Activated T-helper 2 cell treated with anti-CD3 and anti-CD28 coated beads, Interferon-gamma antibody, Interleukin-2, Interleukin-4, amounts not matched to agents 10 μg/mL and 5 μg/mL and 100 μg/mL, durations not matched to agents 14 hours and 24 hours and 36 hours (primary cell): ENCODE measurements at regions of chr22 and their contacts with region 1.

Region 1: GRCh38 chr22:36301384-36301828 is 48.5 kb downstream of the APOL1 start:
- DNase-seq: peak; percentile 68
- H3K4me3 Mint-ChIP-seq: no peak overlapping the region
- H3K27ac Mint-ChIP-seq: no peak overlapping the region
- H3K4me1 Mint-ChIP-seq: peaks cover 8% of the 10 kb centered on the region
- H3K27me3 Mint-ChIP-seq: no peaks in the 10 kb centered on the region

Region 2: GRCh38 chr22:36027935-36028645 is 273.3 kb before region 1 on chr22:
- intact Hi-C with region 1: no loop called
- DNase-seq: no peak
- H3K4me3 Mint-ChIP-seq: peak overlapping the region; percentile 79
- H3K27ac Mint-ChIP-seq: no peak overlapping the region
- H3K4me1 Mint-ChIP-seq: peaks cover 15% of the 10 kb centered on the region
- H3K27me3 Mint-ChIP-seq: peaks cover 44% of the 10 kb centered on the region

Region 3: DNA sequence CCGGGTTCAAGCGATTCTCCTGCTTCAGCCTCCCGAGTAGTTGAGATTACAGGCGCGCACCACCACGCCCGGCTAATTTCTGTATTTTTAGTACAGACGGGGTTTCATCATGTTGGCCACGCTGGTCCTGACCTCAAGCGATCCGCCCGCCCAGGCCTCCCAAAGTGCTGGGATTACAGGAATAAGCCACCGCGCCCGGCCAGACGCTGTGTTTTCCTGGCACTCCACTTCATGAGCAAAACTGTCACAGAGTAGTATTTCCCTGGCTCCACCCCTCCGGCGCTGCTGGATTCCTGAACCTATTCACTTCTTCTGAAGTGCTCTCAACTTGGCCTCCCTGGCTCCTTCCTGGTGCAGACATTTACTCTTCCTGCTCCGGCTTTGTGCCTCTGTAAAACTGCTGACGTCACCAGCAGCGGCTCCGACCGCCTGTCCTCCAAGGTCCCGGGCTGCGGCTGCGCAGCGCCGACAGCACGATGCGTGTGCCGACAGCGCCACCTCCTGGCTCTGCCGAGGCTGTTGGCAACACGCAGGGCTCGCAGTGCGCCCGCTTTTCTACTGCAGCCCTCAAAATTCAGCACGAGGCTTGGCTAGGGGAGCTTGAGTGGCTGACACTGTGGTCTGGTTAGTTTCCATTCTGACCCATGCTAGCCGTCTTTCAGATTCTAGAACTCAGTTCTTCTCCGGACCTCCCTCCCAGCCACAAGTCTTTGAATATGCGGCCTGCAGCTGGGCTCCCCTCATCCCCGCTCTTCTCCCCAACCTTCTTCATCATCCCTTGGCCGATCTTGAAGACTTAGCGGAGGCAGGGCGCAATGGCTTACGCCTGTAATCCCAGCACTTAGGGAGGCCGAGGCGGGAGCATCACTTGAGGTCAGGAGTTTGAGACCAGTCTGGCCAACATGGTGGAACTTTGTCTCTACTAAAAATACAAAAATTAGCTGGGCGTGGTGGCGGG is 177.5 kb before region 1 on chr22:
- intact Hi-C with region 1: no loop called
- DNase-seq: peak; percentile 90
- H3K4me3 Mint-ChIP-seq: peak overlapping the region; percentile 32
- H3K27ac Mint-ChIP-seq: peak overlapping the region; percentile 81
- H3K4me1 Mint-ChIP-seq: peaks cover 7% of the 10 kb centered on the region
- H3K27me3 Mint-ChIP-seq: peaks cover 13% of the 10 kb centered on the region

Region 4: GRCh38 chr22:36286471-36287224 is 14.8 kb before region 1 on chr22:
- intact Hi-C with region 1: no loop called
- DNase-seq: peak; percentile 56
- H3K4me3 Mint-ChIP-seq: no peak overlapping the region
- H3K27ac Mint-ChIP-seq: peak overlapping the region; percentile 52
- H3K4me1 Mint-ChIP-seq: peaks cover 17% of the 10 kb centered on the region
- H3K27me3 Mint-ChIP-seq: no peaks in the 10 kb centered on the region

Region 5: DNA sequence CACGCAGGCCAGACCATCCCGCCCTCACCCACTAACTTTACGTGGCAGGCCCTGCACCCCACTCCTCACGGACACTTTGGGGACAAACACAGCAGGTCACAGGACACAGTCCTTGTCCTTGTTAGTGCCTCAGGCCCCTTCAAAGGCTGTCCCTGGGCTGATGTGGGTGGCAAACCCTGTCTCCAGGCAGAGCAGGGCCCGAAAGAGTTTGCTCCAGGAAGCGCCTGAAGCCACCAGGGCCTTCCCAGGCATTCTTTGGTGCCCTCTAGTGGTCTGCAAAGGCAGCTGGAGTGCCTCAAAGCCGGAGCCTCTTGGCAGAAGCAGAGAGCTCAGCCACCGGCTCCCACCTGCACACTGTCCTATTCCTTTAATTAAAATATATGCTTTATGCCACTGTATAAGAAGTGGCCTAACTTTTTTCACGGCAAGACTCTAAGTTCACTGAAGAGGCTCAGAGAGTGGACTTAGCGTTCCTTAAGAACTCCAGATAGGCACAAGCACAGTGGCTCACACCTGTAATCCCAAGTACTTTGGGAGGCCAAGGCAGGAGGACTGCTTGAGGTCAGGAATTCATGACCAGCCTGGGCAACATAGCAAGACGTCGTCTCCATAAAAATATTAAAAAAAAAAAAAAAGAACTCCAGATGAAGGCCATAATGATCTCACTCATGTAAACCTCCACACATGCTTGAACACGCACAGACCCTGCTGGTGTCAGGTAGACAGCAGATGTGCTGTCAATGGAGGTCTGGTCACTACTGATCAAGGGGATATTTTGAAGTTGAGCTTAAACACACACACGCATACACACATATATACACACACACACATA is 169.0 kb after region 1 on chr22:
- intact Hi-C with region 1: loop called (anchors 1 kb)
- DNase-seq: peak; percentile 76
- H3K4me3 Mint-ChIP-seq: no peak overlapping the region
- H3K27ac Mint-ChIP-seq: peak overlapping the region; percentile 65
- H3K4me1 Mint-ChIP-seq: peaks cover 26% of the 10 kb centered on the region
- H3K27me3 Mint-ChIP-seq: no peaks in the 10 kb centered on the region